OCI-LY7 (cell line): ENCODE measurements at regions of chr3 and their contacts with region 1.

Region 1: GRCh38 chr3:60086811-60087210 is 1037.0 kb upstream of the CFAP20DC start:
- DNase-seq: no peak
- H3K4me3 ChIP-seq: no peak overlapping the region
- H3K27ac ChIP-seq: no peak overlapping the region
- H3K4me1 ChIP-seq: peaks cover 12% of the 10 kb centered on the region
- CTCF ChIP-seq: no peak

Region 2: DNA sequence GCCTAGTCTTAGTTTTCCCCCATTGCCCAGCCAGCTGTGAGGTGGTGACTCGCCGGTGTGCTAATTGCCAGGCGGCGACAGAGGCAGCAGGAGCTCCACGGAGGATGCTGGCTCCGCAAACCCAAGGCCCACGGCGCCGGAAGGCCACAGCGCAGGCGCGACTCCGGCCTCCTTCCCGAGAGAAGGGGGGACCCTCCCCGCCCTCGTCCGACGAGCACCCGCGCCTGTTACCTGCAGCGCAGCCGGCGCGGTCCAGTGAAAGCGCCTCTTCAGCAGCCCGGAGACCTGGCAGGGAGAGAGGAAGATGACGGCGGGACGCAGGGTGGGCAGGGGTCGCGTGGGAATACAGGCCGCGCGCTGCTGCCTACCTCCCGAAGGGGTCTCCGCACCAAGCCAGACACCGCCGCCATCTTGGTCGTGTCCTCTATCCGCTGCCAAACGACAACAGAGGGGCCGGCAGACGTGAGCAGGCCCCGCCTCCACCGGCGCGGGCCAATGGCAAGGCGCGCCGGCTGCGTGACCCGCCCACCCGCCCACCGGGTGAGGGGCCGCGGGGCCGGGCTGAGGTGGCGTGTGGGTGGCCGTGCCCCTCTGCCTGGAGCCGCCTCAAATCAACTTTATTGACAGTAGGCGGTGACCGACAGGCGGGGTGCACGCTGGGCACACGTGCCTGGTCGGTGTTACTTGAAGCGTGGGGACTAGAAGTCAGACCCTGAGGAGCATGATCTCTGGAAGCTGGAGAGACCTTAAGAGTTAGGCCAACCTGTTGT is 1653.2 kb before region 1 on chr3 and contains the start of gene PDHB:
- CTCF ChIA-PET with region 1: no interaction called
- POLR2A ChIA-PET with region 1: no interaction called
- intact Hi-C with region 1: loop called (anchors 10 kb)
- DNase-seq: peak; percentile 93
- H3K4me3 ChIP-seq: peak within 1 kb of the TSS; percentile 83
- H3K27ac ChIP-seq: peak within 1 kb of the TSS; percentile 39
- H3K4me1 ChIP-seq: peaks cover 27% of the 10 kb centered on the region
- CTCF ChIP-seq: 0 out of 2 replicates have a peak, but pooled peaks have one; percentile 23
- total RNA-seq, gene PDHB: 60.8 and 76.8 TPM in 2 replicates